Transverse colon (tissue), 4 donors: ENCODE measurements at regions of chr10 and their contacts with region 1.

Region 1: GRCh38 chr10:79221110-79222051 is 125.9 kb upstream of the PPIF start:
- DNase-seq: peak; percentile 44
- H3K4me3 ChIP-seq: no peak overlapping the region
- H3K27ac ChIP-seq: peak overlapping the region; percentile 65 to 89 (median 83)
- H3K4me1 ChIP-seq: peaks cover 25 to 54% (median 35%) of the 10 kb centered on the region in 4 donors
- H3K27me3 ChIP-seq: no peaks in the 10 kb centered on the region
- CTCF ChIP-seq: no peak
- EP300 ChIP-seq: peak; percentile 26
- POLR2A ChIP-seq: no peak

Region 2: DNA sequence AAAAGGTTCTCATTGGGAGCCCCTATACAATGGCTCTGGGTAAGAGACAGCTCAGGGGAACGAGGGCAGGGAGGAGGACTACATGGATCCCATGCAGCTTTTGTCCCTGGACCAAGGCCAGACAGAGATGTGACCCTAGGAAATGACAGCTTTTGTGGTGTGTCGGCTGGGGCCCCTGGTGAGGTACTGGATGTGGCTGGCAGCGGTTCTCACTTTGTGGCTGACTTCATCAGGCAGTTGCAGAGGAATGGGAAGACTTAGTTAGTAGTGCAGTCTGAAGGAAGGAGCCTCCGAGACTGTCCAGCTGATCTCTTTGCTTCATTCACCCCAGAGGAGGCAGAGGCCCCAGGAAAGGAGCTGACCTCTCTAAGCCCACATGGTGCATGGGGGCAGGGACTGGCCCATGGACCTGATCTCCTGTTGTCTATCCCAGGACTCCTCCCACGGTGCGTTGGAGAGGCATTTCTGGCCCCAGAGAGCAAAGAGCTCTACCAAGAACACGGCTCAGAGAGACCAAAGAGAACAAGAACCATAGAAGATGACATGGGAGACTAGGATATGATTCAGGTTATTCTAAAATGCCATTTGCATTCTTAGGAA is 984.9 kb before region 1 on chr10:
- in situ Hi-C with region 1: no loop called
- intact Hi-C with region 1: no loop called
- DNase-seq: no peak
- H3K4me3 ChIP-seq: no peak overlapping the region
- H3K27ac ChIP-seq: no peak overlapping the region
- H3K4me1 ChIP-seq: peaks cover 0 to 4% (median 0%) of the 10 kb centered on the region in 4 donors
- H3K27me3 ChIP-seq: no peaks in the 10 kb centered on the region
- CTCF ChIP-seq: no peak
- EP300 ChIP-seq: no peak
- POLR2A ChIP-seq: no peak

Region 3: DNA sequence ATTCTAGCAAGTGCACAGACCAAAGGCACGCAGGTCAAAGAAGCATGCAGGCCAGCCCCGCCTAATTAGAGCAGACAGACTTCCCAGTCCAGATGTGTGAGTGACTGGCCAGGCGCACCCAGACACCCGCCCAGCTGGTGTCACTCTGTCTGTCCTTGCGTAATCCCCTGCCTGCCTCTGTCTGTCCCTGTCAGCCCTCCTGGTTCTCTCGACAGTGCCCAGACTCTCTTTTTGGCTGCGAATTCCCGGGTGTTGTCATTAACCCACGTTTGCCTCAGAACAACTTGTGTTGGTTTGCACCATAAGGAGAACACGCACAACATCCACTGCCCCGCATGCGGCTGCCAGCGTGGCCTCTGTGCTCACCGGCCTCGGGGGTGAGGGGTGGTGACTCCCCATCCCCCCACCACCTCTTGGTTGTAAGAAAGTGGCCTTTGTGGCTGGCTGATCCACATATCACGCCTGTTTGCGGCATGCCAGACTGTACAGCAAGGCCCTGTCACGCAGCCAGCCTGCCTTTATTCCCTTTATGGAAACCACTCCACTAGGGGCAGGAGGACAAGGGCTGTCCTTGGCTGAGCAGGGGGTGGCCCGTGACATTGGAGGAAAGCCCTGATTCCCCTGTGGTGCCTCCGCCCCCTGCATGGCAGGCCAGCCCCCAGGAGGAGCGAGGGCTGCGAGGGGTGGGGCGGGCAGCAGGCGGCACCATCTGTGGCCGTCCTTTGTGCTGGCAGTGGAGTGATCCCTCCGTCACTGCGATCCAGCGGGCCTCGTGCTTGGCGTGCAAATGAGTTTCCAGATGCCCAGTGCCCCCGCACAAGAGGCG is 53.1 kb after region 1 on chr10:
- in situ Hi-C with region 1: no loop called
- intact Hi-C with region 1: loop called (anchors 5 kb)
- DNase-seq: peak; percentile 64
- H3K4me3 ChIP-seq: no peak overlapping the region
- H3K27ac ChIP-seq: peak overlapping the region; percentile 76 to 88 (median 84)
- H3K4me1 ChIP-seq: peaks cover 18 to 61% (median 39%) of the 10 kb centered on the region in 4 donors
- H3K27me3 ChIP-seq: no peaks in the 10 kb centered on the region
- CTCF ChIP-seq: peak in 2 of 5 experiments; percentile 12 to 30
- EP300 ChIP-seq: peak; percentile 89
- POLR2A ChIP-seq: no peak

Region 4: GRCh38 chr10:79286318-79286951 is 65.1 kb after region 1 on chr10:
- in situ Hi-C with region 1: no loop called
- intact Hi-C with region 1: no loop called
- DNase-seq: peak; percentile 87
- H3K4me3 ChIP-seq: no peak overlapping the region
- H3K27ac ChIP-seq: peak overlapping the region; percentile 63 to 76 (median 69)
- H3K4me1 ChIP-seq: peaks cover 17 to 53% (median 33%) of the 10 kb centered on the region in 4 donors
- H3K27me3 ChIP-seq: no peaks in the 10 kb centered on the region
- CTCF ChIP-seq: no peak
- EP300 ChIP-seq: peak; percentile 55
- POLR2A ChIP-seq: no peak